ENCODE measurements at regions of chr4 and their contacts with region 1.

Region 1: DNA sequence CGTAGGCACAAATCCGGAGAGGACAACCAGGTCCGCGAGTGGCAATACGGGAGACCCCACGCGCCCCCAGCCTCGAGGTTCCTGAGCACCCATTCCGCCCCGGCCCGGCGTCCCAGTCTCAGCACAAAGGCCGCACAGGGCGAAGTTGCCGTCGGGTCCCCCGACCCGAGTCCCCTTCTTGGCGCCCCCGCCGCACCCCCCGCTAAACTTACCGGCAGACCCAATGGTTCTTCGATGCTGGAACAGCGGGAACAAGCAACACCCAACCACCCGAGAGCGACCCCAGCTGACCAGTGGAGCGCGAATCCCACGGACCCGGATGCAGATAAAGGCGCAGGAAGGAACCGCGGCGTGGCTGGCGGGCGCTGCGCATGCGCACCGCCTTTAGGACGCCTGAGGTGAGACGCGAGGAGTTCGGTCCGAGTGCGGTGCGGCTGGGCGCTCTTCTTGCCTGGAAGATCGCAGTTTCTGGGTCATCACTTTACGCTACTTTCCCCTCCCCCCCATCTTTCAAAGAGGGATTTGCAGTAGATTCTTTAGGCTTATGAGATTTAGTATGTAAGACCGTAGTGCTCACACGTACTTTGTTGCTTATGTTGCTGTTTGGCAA is at the start of gene GNPDA2:
- DNase-seq: peak; percentile 95
- ATAC-seq: peak; percentile 99
- total RNA-seq, gene GNPDA2: 10.2 TPM

Region 2: DNA sequence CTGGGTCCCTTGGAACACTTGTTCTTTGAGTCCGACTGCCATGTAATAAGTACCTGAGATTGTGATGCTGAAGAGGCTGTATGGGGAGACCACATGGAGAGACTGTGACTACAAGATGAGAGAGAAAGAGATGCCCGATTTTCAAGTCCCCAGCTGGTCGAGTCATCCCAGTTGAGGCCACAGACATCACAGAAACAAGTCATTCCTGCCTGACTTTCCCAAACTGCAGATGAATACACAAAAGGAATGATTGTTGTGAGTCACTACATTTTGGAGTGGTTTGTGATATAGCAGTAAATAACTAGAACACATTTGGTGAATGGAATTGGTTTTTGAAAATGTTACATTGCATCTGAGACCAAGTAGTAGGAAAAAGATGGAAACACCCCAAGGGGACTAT is 66.0 kb before region 1 on chr4:
- intact Hi-C with region 1: no loop called
- DNase-seq: no peak
- ATAC-seq: no peak

Region 3: DNA sequence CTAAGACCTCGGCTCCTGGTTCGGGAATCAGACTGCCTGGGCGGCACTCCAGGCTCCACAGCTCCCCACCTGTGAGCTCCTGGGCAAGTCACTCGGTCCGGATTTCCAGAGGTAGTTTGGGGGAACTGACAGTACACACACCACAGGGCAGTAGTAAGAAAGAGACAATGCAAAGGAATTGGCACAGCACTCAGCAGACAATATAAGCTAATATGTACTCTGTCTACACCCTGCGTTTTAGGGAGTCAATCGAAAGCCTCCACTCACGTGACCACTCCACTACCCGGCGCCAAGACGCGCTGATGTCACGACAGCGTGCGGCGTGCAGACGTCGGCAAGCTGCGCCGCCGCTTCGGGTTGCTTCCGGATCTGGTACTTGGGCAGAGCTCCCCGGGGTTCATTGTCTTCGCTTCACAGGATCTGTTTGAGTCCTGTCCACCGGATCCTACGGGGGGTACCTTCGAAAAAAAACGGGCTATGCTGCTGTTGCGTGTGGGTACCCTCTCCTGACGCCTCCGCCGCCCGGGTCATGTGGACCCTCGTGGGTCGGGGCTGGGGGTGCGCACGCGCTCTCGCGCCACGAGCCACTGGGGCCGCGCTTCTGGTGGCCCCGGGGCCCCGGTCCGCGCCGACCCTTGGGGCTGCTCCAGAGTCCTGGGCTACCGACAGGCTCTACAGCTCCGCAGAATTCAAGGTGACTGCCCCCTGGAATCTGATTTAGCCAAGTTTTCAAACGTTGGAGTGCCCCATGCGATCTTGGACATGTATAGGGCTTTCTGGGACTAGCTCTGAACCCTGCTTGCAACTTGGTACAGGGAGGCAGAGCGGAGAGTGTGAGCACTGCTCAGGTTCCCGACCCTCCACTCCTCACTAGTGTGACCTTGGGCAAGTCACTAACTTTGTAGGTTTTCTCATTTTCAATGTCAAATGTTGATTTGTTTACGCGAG is 48.0 kb before region 1 on chr4 and contains the start of gene GUF1:
- intact Hi-C with region 1: loop called (anchors 10 kb)
- DNase-seq: peak; percentile 96
- ATAC-seq: peak; percentile 99
- total RNA-seq, gene GUF1: 21.9 TPM